ENCODE measurements at regions of chr15 and their contacts with region 1.

Region 1: DNA sequence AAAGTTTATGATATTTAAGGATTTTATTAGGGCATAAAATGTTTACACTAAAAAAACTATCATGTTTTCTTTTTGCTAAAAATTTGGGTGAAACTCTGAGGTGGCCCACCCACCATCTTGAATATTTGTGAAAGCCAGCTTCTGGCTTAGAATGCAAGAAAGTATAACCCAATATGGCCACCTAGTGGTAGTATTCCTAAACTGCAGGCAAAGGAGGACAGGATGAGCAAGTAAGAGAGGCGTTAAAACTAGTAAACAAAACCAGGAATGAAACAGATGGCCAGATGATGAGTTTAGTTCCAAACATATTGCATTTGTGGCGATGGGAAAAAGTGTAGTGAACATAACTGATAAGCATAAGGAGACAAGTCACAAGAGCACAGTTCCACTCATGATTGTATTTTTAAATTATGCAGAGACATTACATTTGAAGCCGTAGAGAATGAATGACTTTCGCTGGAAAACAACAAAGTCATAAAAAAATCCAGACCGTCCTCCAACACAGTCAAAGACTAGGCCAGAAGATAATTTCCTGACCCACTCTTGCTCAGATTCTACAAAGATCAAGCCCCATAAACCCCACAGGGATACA is 103.3 kb upstream of the PRTG start:
- DNase-seq: peak; percentile 87
- H3K4me3 ChIP-seq: no peak overlapping the region
- H3K27ac ChIP-seq: no peak overlapping the region
- H3K4me1 ChIP-seq: no peaks in the 10 kb centered on the region
- H3K27me3 ChIP-seq: no peaks in the 10 kb centered on the region
- CTCF ChIP-seq: peak; percentile 66 to 69
- POLR2A ChIP-seq: no peak

Region 2: GRCh38 chr15:55627730-55628368 is 218.4 kb before region 1 on chr15:
- CTCF ChIA-PET with region 1: interaction called, 10 read pairs
- POLR2A ChIA-PET with region 1: no interaction called
- dilution Hi-C with region 1: no loop called
- intact Hi-C with region 1: no loop called
- DNase-seq: peak; percentile 76
- H3K4me3 ChIP-seq: no peak overlapping the region
- H3K27ac ChIP-seq: no peak overlapping the region
- H3K4me1 ChIP-seq: peaks cover 6% of the 10 kb centered on the region
- H3K27me3 ChIP-seq: no peaks in the 10 kb centered on the region
- CTCF ChIP-seq: peak in 1 of 2 donors; percentile 19
- POLR2A ChIP-seq: no peak

Region 3: GRCh38 chr15:55694652-55695150 is 151.5 kb before region 1 on chr15:
- CTCF ChIA-PET with region 1: no interaction called
- POLR2A ChIA-PET with region 1: no interaction called
- dilution Hi-C with region 1: no loop called
- intact Hi-C with region 1: no loop called
- DNase-seq: peak; percentile 28
- H3K4me3 ChIP-seq: no peak overlapping the region
- H3K27ac ChIP-seq: no peak overlapping the region
- H3K4me1 ChIP-seq: no peaks in the 10 kb centered on the region
- H3K27me3 ChIP-seq: no peaks in the 10 kb centered on the region
- CTCF ChIP-seq: no peak
- POLR2A ChIP-seq: no peak

Region 4: GRCh38 chr15:55827204-55827603 is 19.0 kb before region 1 on chr15:
- CTCF ChIA-PET with region 1: interaction called, 12 read pairs
- POLR2A ChIA-PET with region 1: no interaction called
- dilution Hi-C with region 1: no loop called
- intact Hi-C with region 1: no loop called
- DNase-seq: no peak
- H3K4me3 ChIP-seq: no peak overlapping the region
- H3K27ac ChIP-seq: no peak overlapping the region
- H3K4me1 ChIP-seq: no peaks in the 10 kb centered on the region
- H3K27me3 ChIP-seq: no peaks in the 10 kb centered on the region
- CTCF ChIP-seq: no peak
- POLR2A ChIP-seq: no peak

Region 5: GRCh38 chr15:55858661-55859060 is 12.4 kb after region 1 on chr15:
- CTCF ChIA-PET with region 1: interaction called, 11 read pairs
- POLR2A ChIA-PET with region 1: no interaction called
- dilution Hi-C with region 1: no loop called
- intact Hi-C with region 1: no loop called
- DNase-seq: no peak
- H3K4me3 ChIP-seq: no peak overlapping the region
- H3K27ac ChIP-seq: no peak overlapping the region
- H3K4me1 ChIP-seq: peaks cover 11% of the 10 kb centered on the region
- H3K27me3 ChIP-seq: no peaks in the 10 kb centered on the region
- CTCF ChIP-seq: no peak
- POLR2A ChIP-seq: no peak

Region 6: GRCh38 chr15:55907797-55908196 is 61.6 kb after region 1 on chr15:
- CTCF ChIA-PET with region 1: interaction called, 11 read pairs
- POLR2A ChIA-PET with region 1: no interaction called
- dilution Hi-C with region 1: no loop called
- intact Hi-C with region 1: no loop called
- DNase-seq: peak; percentile 76
- H3K4me3 ChIP-seq: no peak overlapping the region
- H3K27ac ChIP-seq: peak overlapping the region; percentile 41
- H3K4me1 ChIP-seq: peaks cover 14% of the 10 kb centered on the region
- H3K27me3 ChIP-seq: no peaks in the 10 kb centered on the region
- CTCF ChIP-seq: no peak
- POLR2A ChIP-seq: no peak

Region 7: GRCh38 chr15:55993111-55993803 is 147.0 kb after region 1 on chr15 and contains the start of gene NEDD4:
- CTCF ChIA-PET with region 1: interaction called, 6 read pairs
- POLR2A ChIA-PET with region 1: no interaction called
- dilution Hi-C with region 1: no loop called
- intact Hi-C with region 1: loop called (anchors 5 kb)
- DNase-seq: peak; percentile 92
- H3K4me3 ChIP-seq: peak within 1 kb of the TSS; percentile 79 to 97 (median 93)
- H3K27ac ChIP-seq: peak within 1 kb of the TSS; percentile 68
- H3K4me1 ChIP-seq: peaks cover 20% of the 10 kb centered on the region
- H3K27me3 ChIP-seq: no peaks in the 10 kb centered on the region
- CTCF ChIP-seq: peak; percentile 35 to 76
- POLR2A ChIP-seq: peak; percentile 75
- total RNA-seq, gene NEDD4: 34.2 and 39.0 TPM in 2 replicates

Region 8: DNA sequence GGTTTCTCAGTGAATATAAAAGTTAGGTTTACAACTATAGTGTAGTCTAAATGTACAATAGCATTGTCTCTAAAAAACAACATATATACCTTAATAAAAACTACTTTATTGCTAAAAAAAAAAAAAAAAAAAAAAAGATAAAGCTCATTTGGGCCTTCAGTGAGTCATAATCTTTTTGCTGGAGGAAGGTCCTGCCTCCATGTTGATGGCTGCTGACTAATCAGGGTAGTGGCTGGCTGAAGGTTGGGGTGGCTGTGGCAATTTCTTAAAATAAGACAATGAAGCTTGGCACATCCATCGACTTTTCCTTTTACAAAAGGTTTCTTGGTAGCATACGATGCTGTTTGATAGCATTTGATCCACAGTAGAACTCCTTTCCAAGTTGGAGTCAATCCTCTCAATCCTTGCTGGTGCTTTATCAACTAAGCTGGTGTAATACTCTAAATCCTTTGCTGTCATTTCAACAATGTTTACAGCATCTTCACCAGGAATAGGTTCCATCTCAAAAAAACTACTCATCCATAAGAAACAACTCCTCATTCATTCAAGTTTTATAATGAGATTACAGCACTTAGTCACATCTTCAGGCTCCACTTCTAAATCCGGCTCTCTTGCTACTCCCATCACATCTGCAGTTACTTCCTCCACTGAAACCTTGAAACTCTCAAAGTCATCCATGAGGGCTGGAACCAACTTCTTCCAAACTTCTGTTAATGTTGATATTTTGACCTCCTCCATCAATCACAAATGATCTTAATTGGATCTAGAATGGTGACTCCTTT is 873.8 kb after region 1 on chr15:
- CTCF ChIA-PET with region 1: no interaction called
- POLR2A ChIA-PET with region 1: no interaction called
- dilution Hi-C with region 1: no loop called
- intact Hi-C with region 1: no loop called
- DNase-seq: no peak
- H3K4me3 ChIP-seq: no peak overlapping the region
- H3K27ac ChIP-seq: no peak overlapping the region
- H3K4me1 ChIP-seq: no peaks in the 10 kb centered on the region
- H3K27me3 ChIP-seq: no peaks in the 10 kb centered on the region
- CTCF ChIP-seq: no peak
- POLR2A ChIP-seq: no peak

Measured in endothelial cell of umbilical vein (primary cell).